ENCODE measurements at regions of chr4 and their contacts with region 1.

Region 1: DNA sequence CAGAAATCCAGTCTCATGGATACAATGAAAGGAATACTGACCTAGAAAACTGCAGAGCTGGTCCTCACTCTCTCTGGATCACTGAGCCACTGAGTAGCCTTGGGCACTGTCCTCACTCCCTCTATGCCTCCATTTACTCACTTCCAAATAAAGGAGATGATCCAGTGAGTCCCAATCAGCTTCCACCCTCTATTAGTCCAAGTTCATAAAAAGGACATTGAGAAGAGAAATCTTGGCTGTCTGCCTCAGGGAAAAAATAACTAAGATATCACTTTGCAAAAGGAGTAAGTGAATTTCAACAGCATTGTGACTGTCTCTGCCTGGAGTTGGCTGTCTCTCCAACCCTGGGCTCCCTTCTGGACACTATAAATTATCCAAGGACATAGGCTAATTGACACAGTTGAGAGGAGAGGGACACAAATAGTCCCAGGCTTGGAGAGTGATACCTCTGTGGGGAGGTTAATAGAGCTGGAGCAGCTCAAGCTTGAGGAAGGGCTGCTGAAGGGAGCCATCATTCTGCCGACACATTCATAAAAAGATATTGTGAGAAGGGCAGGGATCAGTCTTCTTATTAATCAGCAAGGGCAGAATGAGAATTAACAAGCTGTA is 572.3 kb downstream of the RAB28 start:
- DNase-seq: no peak
- ATAC-seq: no peak
- H3K4me3 ChIP-seq: no peak overlapping the region
- H3K27ac ChIP-seq: no peak overlapping the region
- H3K4me1 ChIP-seq: no peaks in the 10 kb centered on the region
- H3K27me3 ChIP-seq: no peaks in the 10 kb centered on the region
- CTCF ChIP-seq: no peak

Region 2: GRCh38 chr4:13367244-13367643 is 455.4 kb after region 1 on chr4:
- CTCF ChIA-PET with region 1: interaction called, 13 read pairs
- POLR2A ChIA-PET with region 1: no interaction called
- in situ Hi-C with region 1: no loop called
- intact Hi-C with region 1: no loop called
- DNase-seq: no peak
- ATAC-seq: no peak
- H3K4me3 ChIP-seq: no peak overlapping the region
- H3K27ac ChIP-seq: no peak overlapping the region
- H3K4me1 ChIP-seq: no peaks in the 10 kb centered on the region
- H3K27me3 ChIP-seq: no peaks in the 10 kb centered on the region
- CTCF ChIP-seq: no peak

Region 3: DNA sequence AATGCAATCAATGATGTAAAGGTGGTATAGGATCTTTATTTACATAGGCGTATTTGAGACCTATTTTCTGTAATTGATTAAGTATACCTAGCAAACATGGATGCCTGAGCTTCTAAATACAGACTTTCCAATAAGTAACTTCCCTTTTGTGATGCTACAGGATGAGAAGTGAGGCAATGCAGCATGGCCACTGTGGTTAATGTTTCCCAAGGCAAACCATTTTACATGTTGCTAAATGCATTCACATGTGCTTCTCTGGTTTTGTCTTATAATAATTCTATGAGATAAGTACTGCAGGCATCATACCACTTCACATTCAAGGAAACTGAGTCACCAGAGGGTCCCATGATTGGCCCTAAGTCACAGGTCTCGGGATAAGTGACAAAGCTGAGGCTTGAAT is 668.2 kb after region 1 on chr4:
- CTCF ChIA-PET with region 1: no interaction called
- POLR2A ChIA-PET with region 1: no interaction called
- in situ Hi-C with region 1: no loop called
- intact Hi-C with region 1: no loop called
- DNase-seq: no peak
- ATAC-seq: no peak
- H3K4me3 ChIP-seq: no peak overlapping the region
- H3K27ac ChIP-seq: no peak overlapping the region
- H3K4me1 ChIP-seq: no peaks in the 10 kb centered on the region
- H3K27me3 ChIP-seq: no peaks in the 10 kb centered on the region
- CTCF ChIP-seq: no peak